PC-9 (cell line): ENCODE measurements at regions of chr17 and their contacts with region 1.

Region 1: DNA sequence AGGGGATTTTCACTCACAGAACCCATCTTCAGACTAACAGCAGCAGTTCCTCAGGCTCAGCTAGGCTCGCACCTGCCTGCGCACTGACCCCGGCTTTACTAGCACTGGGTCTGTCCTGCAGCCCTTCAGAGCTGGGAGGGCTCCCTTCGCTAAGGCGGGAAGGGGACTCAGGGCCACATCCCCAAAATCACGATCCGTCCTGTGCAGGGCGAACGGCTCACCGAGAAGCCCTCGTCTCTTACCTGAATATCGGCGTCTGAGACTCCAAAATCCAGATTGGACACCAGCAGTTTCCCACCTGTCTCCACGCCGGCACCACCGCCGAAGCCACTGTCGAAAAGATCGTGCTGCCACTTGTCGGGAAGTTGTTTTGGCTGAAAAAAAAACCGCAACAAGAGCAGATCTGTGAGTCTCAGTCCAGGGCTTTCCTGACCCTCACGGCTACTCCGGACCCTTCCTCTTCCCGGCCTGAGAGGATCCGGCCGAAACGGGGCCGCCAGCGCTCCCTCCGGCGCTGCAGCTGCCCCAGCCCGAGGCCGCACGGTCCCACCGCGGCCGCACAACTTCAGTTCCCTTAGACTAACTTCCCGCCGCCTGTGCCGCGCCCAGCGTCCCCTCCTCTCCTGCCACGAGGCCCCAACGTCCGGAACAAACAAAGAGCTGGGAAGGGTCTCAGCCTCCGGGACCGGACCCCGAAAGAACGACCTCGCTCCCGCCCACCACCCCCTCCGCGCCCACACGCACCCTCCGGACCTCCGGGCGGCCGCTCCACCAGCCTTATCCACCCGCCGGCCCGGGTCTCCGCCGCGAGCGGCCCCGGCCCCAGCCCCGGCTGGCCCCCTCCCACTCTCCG is 713 bp downstream of the ALYREF start:
- DNase-seq: no peak
- H3K4me3 ChIP-seq: peak overlapping the region; percentile 66
- H3K27ac ChIP-seq: no peak overlapping the region
- H3K4me1 ChIP-seq: peaks cover 21% of the 10 kb centered on the region
- H3K27me3 ChIP-seq: no peaks in the 10 kb centered on the region
- CTCF ChIP-seq: no peak

Region 2: DNA sequence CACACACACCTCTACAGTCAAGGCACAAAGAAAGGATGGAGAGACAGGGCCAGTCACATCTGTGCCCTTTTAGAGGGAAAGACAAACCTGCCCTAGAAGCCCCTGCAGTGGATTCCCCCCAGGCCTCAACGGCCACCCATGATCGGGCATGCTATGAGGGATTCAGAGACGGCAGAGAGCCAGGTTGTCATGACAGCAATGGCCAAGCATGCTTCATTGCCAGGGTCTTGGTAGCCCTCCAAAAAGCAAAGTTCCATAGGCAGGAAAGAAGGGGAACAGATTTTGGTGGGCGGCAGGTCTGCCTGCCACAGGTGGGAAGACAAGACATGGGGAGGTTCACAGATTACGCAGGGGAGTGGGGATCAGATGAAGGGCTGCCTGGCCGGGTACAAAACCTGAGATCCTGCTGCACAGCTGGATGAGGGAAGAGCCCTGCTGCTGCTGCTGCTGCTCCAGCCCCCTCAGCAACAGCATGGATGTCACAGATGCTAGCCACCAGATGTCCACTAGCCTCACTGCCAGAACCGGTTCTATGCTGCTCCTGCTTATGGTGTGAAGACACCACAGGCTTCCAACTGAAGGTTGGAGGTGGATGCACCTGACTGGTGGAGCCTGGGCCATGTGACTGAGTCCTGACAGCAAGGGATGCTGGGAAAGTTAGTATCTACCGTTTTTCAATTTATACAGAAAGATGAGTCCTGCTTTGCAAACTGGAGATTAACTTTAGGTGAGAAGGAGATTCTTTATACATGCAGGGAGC is 395.9 kb before region 1 on chr17:
- CTCF ChIA-PET with region 1: no interaction called
- POLR2A ChIA-PET with region 1: no interaction called
- intact Hi-C with region 1: no loop called
- DNase-seq: peak in 1 of 2 experiments; percentile 30
- H3K4me3 ChIP-seq: no peak overlapping the region
- H3K27ac ChIP-seq: no peak overlapping the region
- H3K4me1 ChIP-seq: no peaks in the 10 kb centered on the region
- H3K27me3 ChIP-seq: no peaks in the 10 kb centered on the region
- CTCF ChIP-seq: no peak

Region 3: DNA sequence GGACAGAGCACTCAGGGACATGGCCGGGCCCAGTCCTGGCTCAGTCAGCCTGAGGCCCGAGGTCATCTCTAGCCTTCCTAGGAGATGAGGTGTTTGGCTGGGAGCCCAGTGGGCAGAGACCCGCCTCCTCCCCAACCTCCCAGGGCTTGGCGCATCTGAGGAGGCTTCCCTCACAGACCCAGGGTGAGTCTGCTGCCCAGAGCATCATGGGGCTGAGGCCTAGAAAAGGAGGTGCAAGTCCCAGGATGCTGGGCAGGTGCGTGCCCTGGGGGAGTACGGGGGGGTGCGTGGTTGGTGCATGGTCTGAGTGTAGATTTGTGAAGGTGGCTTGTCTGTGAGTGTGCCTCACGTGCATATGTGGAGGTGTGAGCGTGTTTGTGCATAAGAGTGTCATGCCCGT is 239.0 kb before region 1 on chr17:
- CTCF ChIA-PET with region 1: no interaction called
- POLR2A ChIA-PET with region 1: no interaction called
- intact Hi-C with region 1: no loop called
- DNase-seq: peak; percentile 70 to 89
- H3K4me3 ChIP-seq: no peak overlapping the region
- H3K27ac ChIP-seq: no peak overlapping the region
- H3K4me1 ChIP-seq: no peaks in the 10 kb centered on the region
- H3K27me3 ChIP-seq: no peaks in the 10 kb centered on the region
- CTCF ChIP-seq: no peak

Region 4: GRCh38 chr17:81854974-81855774 is 35.5 kb before region 1 on chr17:
- CTCF ChIA-PET with region 1: no interaction called
- POLR2A ChIA-PET with region 1: interaction called, 18 read pairs
- intact Hi-C with region 1: loop called (anchors 1 kb)
- DNase-seq: no peak
- H3K4me3 ChIP-seq: no peak overlapping the region
- H3K27ac ChIP-seq: no peak overlapping the region
- H3K4me1 ChIP-seq: no peaks in the 10 kb centered on the region
- H3K27me3 ChIP-seq: no peaks in the 10 kb centered on the region
- CTCF ChIP-seq: no peak

Region 5: GRCh38 chr17:81871387-81872230 is 19.1 kb before region 1 on chr17:
- CTCF ChIA-PET with region 1: no interaction called
- POLR2A ChIA-PET with region 1: interaction called, 30 read pairs
- intact Hi-C with region 1: no loop called
- DNase-seq: peak; percentile 47 to 91
- H3K4me3 ChIP-seq: peak overlapping the region; percentile 88
- H3K27ac ChIP-seq: peak overlapping the region; percentile 87
- H3K4me1 ChIP-seq: 0 out of 2 replicates have a peak, but pooled peaks cover 14% of the 10 kb centered on the region
- H3K27me3 ChIP-seq: no peaks in the 10 kb centered on the region
- CTCF ChIP-seq: no peak; the same call in 1 of the 2 replicates